GM10248 (cell line): ENCODE measurements at regions of chr3 and their contacts with region 1.

Region 1: DNA sequence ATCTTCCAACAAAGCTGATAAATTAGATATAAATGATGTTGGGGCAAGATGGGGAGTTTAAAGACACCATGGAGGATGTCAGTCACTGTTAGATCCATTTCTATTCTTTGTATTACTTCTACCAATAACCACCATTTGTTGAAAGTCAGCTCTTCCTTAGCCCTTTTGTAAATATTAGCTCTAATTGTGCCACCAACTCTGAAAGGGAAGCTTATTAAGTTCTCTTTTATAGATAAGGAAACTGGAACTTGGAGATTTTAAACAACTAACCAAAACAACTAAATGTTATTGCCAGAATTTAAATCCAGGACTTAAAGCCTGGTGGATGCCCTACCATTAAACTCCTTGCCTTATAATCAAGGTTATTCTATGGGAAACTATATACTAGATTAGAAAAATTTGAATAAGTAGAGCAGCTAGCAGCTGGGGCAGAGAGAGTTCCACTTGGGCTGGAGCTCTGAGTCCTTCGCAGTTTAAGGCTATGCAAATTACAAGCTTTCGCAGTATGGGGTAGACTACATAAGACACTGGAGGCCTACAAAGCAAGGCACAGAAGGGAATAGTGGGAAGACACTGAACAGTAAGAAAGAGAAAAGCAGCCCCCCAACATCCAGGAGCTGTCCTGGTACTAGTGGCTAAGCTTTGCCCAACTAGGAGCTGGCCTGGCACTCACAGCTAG is 52.6 kb downstream of the TM4SF18 start:
- DNase-seq: no peak
- CTCF ChIP-seq: no peak

Region 2: GRCh38 chr3:149291178-149291577 is 10.4 kb after region 1 on chr3:
- CTCF ChIA-PET with region 1: interaction called, 23 read pairs
- POLR2A ChIA-PET with region 1: no interaction called
- DNase-seq: peak; percentile 27
- CTCF ChIP-seq: peak; percentile 44

Region 3: GRCh38 chr3:149296972-149297371 is 16.2 kb after region 1 on chr3:
- CTCF ChIA-PET with region 1: interaction called, 23 read pairs
- POLR2A ChIA-PET with region 1: no interaction called
- DNase-seq: no peak
- CTCF ChIP-seq: no peak